T-cell (primary cell): ENCODE measurements at regions of chr6 and their contacts with region 1.

Region 1: GRCh38 chr6:111865909-111866546 is 7.2 kb downstream of the FYN start:
- DNase-seq: no peak
- ATAC-seq: no peak
- H3K4me3 ChIP-seq: no peak overlapping the region
- H3K4me3 Mint-ChIP-seq: peak overlapping the region; percentile 28 to 99 (median 66)
- H3K27ac ChIP-seq: peak overlapping the region; percentile 35
- H3K27ac Mint-ChIP-seq: peak overlapping the region; percentile 79 to 84
- H3K4me1 ChIP-seq: peaks cover 71 to 82% of the 10 kb centered on the region in 2 experiments
- H3K4me1 Mint-ChIP-seq: peaks cover 97 to 100% (median 99%) of the 10 kb centered on the region in 3 donors
- H3K27me3 ChIP-seq: no peaks in the 10 kb centered on the region
- H3K27me3 Mint-ChIP-seq: no peaks in the 10 kb centered on the region

Region 2: DNA sequence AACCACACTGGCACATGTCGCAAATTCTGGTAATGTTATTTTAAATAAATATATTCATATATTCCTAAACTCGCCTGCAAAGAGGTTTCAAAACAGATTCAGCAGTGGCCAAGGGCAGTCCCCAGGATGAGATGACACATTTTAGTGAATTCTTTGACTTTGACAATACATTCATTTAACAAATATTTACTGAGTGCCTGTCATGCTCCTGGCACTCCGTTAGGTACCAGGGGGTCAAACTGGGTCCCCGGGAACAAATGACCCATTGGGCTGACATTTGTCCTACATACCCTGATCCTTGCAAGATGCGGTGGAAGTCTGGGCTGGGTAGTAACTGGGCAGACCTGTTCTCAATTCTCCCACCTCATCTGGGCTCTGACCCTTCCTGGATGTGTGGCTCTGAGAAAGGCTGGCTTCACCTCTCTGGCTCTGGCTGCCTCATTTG is 67.7 kb before region 1 on chr6:
- CTCF ChIA-PET with region 1: interaction called in 1 of 2 experiments, 5 read pairs
- POLR2A ChIA-PET with region 1: interaction called, 6 to 11 read pairs
- DNase-seq: no peak
- ATAC-seq: no peak
- H3K4me3 ChIP-seq: no peak overlapping the region
- H3K4me3 Mint-ChIP-seq: no peak overlapping the region
- H3K27ac ChIP-seq: no peak overlapping the region
- H3K27ac Mint-ChIP-seq: peak overlapping the region; percentile 58 to 66
- H3K4me1 ChIP-seq: peaks cover 35 to 42% of the 10 kb centered on the region in 2 experiments
- H3K4me1 Mint-ChIP-seq: peaks cover 50 to 89% (median 84%) of the 10 kb centered on the region in 3 donors
- H3K27me3 ChIP-seq: no peaks in the 10 kb centered on the region
- H3K27me3 Mint-ChIP-seq: no peaks in the 10 kb centered on the region

Region 3: GRCh38 chr6:111817451-111818120 is 48.4 kb before region 1 on chr6:
- CTCF ChIA-PET with region 1: interaction called in 1 of 2 experiments, 4 read pairs
- POLR2A ChIA-PET with region 1: interaction called, 4 to 10 read pairs
- DNase-seq: no peak
- ATAC-seq: no peak
- H3K4me3 ChIP-seq: no peak overlapping the region
- H3K4me3 Mint-ChIP-seq: peak overlapping the region in 1 of 3 donors; percentile 52
- H3K27ac ChIP-seq: no peak overlapping the region
- H3K27ac Mint-ChIP-seq: peak overlapping the region; percentile 71 to 89
- H3K4me1 ChIP-seq: peaks cover 29 to 35% of the 10 kb centered on the region in 2 experiments
- H3K4me1 Mint-ChIP-seq: peaks cover 63 to 76% (median 71%) of the 10 kb centered on the region in 3 donors
- H3K27me3 ChIP-seq: no peaks in the 10 kb centered on the region
- H3K27me3 Mint-ChIP-seq: no peaks in the 10 kb centered on the region